ENCODE measurements at regions of chr20 and their contacts with region 1.

Region 1: DNA sequence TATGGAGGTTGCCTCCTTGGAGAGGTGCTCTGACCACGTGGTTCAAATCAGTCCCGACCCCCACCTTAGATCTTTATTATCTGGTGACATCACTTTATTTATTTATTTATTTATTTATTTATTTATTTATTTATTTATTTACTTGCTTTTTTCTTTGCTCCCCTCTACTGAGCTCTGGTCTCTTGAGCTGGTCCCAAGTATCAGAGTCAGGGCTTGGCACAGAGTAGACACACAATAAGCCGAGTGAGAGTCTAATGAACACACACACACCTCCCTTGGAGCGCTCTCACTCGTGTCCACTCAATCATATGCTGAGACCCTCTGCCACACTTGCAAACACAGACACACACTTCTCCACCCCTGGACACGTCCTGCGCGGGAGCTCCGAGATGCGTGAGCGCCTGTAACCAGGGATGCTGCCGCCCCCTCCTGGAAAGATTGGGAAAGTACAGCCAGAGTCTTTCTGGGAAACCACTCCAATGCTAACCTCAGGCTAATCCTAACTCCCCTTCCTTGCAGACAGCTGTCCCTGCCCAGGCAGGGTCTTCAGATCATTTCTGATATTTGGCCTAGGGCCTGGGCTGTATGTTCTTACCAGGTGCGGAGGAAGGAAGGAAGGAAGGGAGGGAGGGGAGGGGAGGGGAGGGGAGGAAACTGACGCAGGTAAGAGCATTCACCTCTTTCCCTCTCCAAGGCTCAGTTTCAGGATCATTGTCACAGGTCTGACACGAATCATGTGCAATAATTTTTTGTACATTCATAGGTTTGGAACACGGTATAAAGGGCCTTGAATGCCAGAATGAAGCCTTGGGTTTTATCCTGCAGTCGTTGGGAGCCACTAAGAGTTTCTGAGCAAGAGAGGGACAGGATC is 70.9 kb downstream of the STK35 start:
- DNase-seq: peak; percentile 67 to 92 (median 84)

Region 2: GRCh38 chr20:1965520-1966351 is 206.8 kb before region 1 on chr20:
- intact Hi-C with region 1: loop called (anchors 2 kb)
- DNase-seq: peak; percentile 72 to 94 (median 87)

Region 3: DNA sequence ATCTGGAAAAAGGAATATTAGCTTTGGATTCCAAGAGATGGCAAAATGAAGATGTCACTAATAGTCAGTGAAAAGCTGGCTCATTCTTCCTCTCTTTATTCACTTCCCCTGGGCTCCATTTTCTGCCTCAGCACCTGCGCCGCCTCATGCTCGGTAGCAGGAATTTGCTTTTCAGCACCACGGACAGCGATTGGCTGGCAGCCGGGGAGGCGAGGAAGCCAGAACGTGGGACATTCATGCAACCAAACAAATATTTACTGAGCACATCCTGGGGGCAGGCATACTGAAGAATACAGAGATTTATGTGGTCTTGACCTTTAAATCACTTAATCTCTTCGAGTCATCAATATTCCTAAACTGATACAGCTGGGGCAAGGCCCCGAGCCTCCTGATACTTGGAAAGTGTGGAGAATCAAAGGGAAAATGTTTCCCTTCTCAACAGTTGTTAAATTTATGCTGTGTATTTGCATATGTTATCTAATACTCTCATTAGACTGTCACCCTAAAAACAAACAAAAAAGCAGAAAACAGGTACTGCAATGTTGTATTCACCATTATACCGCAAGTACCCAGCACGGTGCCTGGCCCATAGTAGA is 166.6 kb before region 1 on chr20:
- intact Hi-C with region 1: no loop called
- DNase-seq: peak in 41 of 42 donors; percentile 29 to 87 (median 65)

Region 4: DNA sequence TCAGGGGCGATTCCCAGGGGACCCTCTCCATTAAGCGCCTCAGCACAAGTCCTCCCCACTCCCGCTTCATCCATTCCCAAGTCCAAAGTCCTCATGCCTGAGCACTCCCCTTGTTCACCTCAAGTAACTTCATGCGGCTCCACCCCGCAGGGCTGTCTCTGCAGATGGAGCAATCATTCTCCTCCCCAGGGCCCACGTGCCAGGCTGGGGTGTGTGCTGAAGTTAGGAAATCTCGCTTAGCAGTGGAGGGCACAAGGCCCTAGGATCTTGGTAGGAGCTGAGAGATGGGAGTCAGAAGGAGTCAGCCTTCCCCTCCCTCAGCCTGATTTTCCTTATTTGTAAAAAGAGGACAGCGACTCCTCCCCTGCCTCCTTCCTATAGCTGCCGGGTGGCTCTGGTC is 126.8 kb after region 1 on chr20:
- intact Hi-C with region 1: no loop called
- DNase-seq: peak in 4 of 42 donors; percentile 13 to 47 (median 32)

Measured in head of caudate nucleus (tissue), 42 donors.